ENCODE measurements at regions of chr1 and their contacts with region 1.

Region 1: DNA sequence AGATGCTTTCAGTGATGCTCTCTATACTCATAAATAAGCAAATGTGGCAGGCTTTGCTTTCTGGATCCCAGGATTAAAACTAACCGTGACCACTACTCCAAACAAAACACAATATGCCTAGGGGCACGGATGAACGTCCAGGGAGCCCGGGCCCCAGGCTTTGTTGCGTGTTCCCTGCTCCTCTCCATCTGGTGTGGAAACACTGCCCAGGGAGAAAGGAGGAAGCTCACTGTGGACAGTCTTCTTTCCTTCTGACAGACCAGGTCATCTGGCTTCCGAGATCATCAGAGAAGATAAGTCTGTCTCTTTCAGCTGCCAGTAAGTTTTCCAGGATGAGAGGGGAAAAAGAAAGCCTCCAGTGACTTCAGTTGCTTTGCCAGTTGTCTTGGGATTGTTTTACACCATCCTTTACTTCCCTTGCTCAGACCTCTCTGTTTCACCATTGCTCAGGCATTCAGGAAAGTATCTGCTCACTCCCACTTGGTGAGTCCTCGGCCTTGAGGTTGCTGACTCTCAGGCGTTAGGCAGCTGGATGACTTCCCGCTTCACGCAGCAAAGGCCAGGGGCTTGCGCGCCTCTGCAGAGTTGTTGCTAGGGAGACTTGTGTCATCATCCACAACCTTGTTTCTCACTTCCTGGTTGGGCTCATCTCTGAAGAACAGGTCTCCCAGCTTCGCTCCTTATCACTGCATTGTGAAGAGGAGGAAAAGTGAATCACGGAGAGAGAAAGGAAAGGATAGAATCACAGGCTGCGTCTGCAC is 20.6 kb upstream of the PGD start:
- DNase-seq: peak; percentile 95
- ATAC-seq: peak; percentile 41
- H3K4me3 ChIP-seq: no peak overlapping the region
- H3K27ac ChIP-seq: peak overlapping the region; percentile 73
- H3K4me1 ChIP-seq: peaks cover 6% of the 10 kb centered on the region
- H3K27me3 ChIP-seq: no peaks in the 10 kb centered on the region
- CTCF ChIP-seq: no peak
- POLR2A ChIP-seq: no peak
- RAD21 ChIP-seq: no peak

Region 2: DNA sequence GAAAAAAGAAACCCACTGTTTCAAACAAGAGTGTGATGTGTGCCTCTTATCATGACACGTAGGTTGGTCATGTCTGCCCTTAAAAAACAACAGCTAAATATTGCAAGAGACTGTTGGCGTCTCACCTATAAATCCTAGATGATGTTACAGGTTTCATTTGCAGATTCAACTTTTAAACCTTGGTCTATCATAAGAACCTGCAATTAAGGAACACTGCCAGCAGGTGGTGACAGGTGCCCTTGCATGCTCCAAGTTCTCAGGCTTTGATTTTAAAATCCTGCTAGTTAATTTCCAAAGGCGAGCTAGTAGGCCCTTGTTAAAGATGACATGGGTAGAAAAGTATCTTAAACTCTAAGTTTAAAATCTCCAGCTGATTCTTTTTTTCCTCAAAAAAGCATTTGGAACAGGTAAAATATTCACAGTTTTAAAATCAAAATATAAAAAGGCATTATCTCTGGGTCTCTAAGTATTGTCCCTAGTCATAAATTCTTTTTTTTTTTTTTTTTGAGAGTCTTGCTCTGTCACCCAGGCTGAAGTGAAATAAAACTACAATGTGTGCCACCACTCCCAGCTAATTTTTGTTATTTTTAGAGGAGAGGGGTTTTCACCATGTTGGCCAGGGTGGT is 593.6 kb before region 1 on chr1:
- CTCF ChIA-PET with region 1: no interaction called
- POLR2A ChIA-PET with region 1: no interaction called
- dilution Hi-C with region 1: no loop called
- in situ Hi-C with region 1: no loop called
- intact Hi-C with region 1: no loop called
- DNase-seq: peak; percentile 68
- ATAC-seq: peak; percentile 66
- H3K4me3 ChIP-seq: no peak overlapping the region
- H3K27ac ChIP-seq: no peak overlapping the region
- H3K4me1 ChIP-seq: peaks cover 2% of the 10 kb centered on the region; the same call in 1 of the 2 replicates
- H3K27me3 ChIP-seq: no peaks in the 10 kb centered on the region
- CTCF ChIP-seq: peak; percentile 70
- POLR2A ChIP-seq: no peak
- RAD21 ChIP-seq: peak; percentile 84

Region 3: DNA sequence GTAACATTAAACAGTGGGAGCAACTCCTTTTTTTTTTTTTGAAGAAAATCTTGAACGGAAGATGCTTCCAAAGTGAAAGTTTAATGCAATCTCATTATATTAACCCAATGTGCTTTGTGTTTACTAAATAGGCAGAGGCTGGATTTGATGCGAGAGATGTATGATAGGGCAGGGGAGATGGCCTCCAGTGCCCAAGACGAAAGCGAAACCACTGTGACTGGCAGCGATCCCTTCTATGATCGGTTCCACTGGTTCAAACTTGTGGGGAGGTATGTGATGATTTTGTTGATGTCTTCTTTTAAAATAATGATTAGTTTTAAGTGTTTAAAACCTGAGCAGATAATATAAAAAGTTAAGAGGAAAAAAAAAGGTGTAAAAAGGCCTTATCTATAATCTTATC is 53.6 kb before region 1 on chr1:
- CTCF ChIA-PET with region 1: no interaction called
- POLR2A ChIA-PET with region 1: no interaction called
- dilution Hi-C with region 1: no loop called
- in situ Hi-C with region 1: no loop called
- intact Hi-C with region 1: no loop called
- DNase-seq: no peak
- ATAC-seq: no peak
- H3K4me3 ChIP-seq: no peak overlapping the region
- H3K27ac ChIP-seq: no peak overlapping the region
- H3K4me1 ChIP-seq: no peaks in the 10 kb centered on the region
- H3K27me3 ChIP-seq: no peaks in the 10 kb centered on the region
- CTCF ChIP-seq: no peak
- POLR2A ChIP-seq: no peak
- RAD21 ChIP-seq: no peak

Region 4: DNA sequence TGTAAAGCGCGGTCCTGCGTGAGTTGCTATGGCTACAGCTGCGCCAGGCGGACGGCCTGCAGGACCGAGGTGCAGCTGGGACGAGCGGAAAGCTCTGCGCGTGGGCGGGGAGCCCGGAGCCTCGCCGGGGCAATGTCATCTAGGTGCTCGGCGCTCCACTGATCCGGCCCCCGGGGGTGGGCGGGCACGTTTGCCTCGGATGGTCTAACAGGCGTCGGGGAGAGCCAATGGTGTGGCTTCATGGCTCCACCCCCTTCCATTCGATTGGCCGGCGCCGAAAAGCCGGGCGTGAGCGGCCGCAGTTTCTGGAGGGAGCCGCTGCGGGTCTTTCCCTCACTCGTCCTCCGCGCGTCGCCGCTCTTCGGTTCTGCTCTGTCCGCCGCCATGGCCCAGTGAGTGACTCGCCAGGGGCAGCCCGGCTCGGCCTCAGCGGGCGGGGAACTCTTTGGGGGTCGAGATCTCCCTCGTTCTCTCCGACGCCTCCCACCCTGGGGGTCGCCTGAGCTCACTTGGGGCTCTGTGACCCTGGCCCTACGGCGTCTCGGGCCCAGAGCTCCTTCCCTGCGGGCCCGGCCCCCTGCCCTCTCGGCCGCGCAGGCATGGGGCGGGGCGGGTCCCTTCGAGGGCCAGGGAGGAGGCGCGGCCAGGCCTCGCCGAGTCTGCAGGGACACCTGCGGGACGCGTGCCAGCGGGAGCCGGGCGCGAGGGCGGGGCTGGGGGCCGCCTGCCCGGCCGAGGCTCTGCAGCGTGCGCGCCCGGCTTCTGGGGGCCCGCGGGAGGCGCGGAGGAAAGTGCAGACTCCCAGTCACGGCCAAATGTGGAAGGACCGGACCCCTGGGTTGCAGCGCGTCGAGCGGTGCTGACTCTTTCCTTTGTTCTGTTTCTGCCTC is 20.7 kb after region 1 on chr1 and contains the start of gene PGD:
- CTCF ChIA-PET with region 1: interaction called, 3 read pairs
- POLR2A ChIA-PET with region 1: interaction called, 6 read pairs
- dilution Hi-C with region 1: no loop called
- in situ Hi-C with region 1: no loop called
- intact Hi-C with region 1: loop called (anchors 1 kb)
- DNase-seq: peak; percentile 98
- ATAC-seq: peak; percentile 95
- H3K4me3 ChIP-seq: peak within 1 kb of the TSS; percentile 76
- H3K27ac ChIP-seq: peak within 1 kb of the TSS; percentile 85
- H3K4me1 ChIP-seq: peaks cover 6% of the 10 kb centered on the region
- H3K27me3 ChIP-seq: no peaks in the 10 kb centered on the region
- CTCF ChIP-seq: no peak
- POLR2A ChIP-seq: peak; percentile 96
- RAD21 ChIP-seq: no peak
- total RNA-seq, gene PGD: 187 and 216 TPM in 2 replicates

Region 5: GRCh38 chr1:10415211-10415930 is 37.1 kb after region 1 on chr1:
- CTCF ChIA-PET with region 1: no interaction called
- POLR2A ChIA-PET with region 1: no interaction called
- dilution Hi-C with region 1: no loop called
- in situ Hi-C with region 1: loop called (anchors 5 kb)
- intact Hi-C with region 1: no loop called
- DNase-seq: peak; percentile 91
- ATAC-seq: peak; percentile 92
- H3K4me3 ChIP-seq: no peak overlapping the region
- H3K27ac ChIP-seq: peak overlapping the region; percentile 95
- H3K4me1 ChIP-seq: peaks cover 3% of the 10 kb centered on the region
- H3K27me3 ChIP-seq: no peaks in the 10 kb centered on the region
- CTCF ChIP-seq: no peak
- POLR2A ChIP-seq: peak; percentile 66
- RAD21 ChIP-seq: no peak

Region 6: DNA sequence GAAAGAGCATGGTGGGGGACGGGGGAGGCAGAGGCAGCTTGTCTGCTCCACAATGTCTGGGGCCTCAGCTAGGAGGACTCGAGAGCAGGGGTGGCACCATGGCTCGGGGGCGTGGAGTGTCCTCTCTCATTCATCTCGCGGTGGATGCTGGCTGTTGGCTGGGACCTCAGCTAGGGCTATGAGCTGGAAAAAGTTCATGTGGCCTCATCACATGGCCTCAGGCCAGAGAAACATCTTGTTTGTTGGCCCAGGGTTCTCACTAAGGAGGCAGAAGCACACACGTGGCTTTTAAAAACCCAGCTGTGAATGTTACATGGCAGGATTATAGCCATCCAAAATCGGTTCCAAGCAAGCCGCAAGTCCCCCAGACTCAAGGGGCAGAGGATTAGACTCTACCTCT is 45.8 kb after region 1 on chr1:
- CTCF ChIA-PET with region 1: no interaction called
- POLR2A ChIA-PET with region 1: no interaction called
- dilution Hi-C with region 1: no loop called
- in situ Hi-C with region 1: loop called (anchors 5 kb)
- intact Hi-C with region 1: loop called (anchors 1 kb)
- DNase-seq: peak; percentile 65
- ATAC-seq: peak; percentile 65
- H3K4me3 ChIP-seq: no peak overlapping the region
- H3K27ac ChIP-seq: no peak overlapping the region
- H3K4me1 ChIP-seq: no peaks in the 10 kb centered on the region; the same call in 1 of the 2 replicates
- H3K27me3 ChIP-seq: no peaks in the 10 kb centered on the region
- CTCF ChIP-seq: no peak
- POLR2A ChIP-seq: no peak
- RAD21 ChIP-seq: no peak

Region 7: GRCh38 chr1:10430216-10431069 is 52.2 kb after region 1 on chr1 and contains the start of gene CENPS:
- CTCF ChIA-PET with region 1: interaction called, 4 read pairs
- POLR2A ChIA-PET with region 1: no interaction called
- dilution Hi-C with region 1: no loop called
- in situ Hi-C with region 1: no loop called
- intact Hi-C with region 1: loop called (anchors 1 kb)
- DNase-seq: peak; percentile 83
- ATAC-seq: peak; percentile 95
- H3K4me3 ChIP-seq: peak within 1 kb of the TSS; percentile 76
- H3K27ac ChIP-seq: peak within 1 kb of the TSS; percentile 86
- H3K4me1 ChIP-seq: peaks cover 2% of the 10 kb centered on the region; the same call in 1 of the 2 replicates
- H3K27me3 ChIP-seq: no peaks in the 10 kb centered on the region
- CTCF ChIP-seq: peak; percentile 98
- POLR2A ChIP-seq: no peak; the same call in 1 of the 2 replicates
- RAD21 ChIP-seq: peak; percentile 66
- total RNA-seq, gene CENPS: 9.9 and 11.4 TPM in 2 replicates

Region 8: GRCh38 chr1:10494754-10495474 is 116.7 kb after region 1 on chr1:
- CTCF ChIA-PET with region 1: no interaction called
- POLR2A ChIA-PET with region 1: no interaction called
- dilution Hi-C with region 1: no loop called
- in situ Hi-C with region 1: loop called (anchors 5 kb)
- intact Hi-C with region 1: loop called (anchors 1 kb)
- DNase-seq: peak; percentile 61
- ATAC-seq: peak; percentile 95
- H3K4me3 ChIP-seq: no peak overlapping the region; the same call in 1 of the 2 replicates
- H3K27ac ChIP-seq: no peak overlapping the region
- H3K4me1 ChIP-seq: peaks cover 5% of the 10 kb centered on the region
- H3K27me3 ChIP-seq: no peaks in the 10 kb centered on the region
- CTCF ChIP-seq: peak; percentile 93
- POLR2A ChIP-seq: no peak
- RAD21 ChIP-seq: peak; percentile 84

Measured in IMR-90 (cell line).